Endothelial cell of umbilical vein (primary cell): ENCODE measurements at regions of chr10 and their contacts with region 1.

Region 1: GRCh38 chr10:60816628-60817397 is 38.5 kb downstream of the CDK1 start:
- DNase-seq: peak; percentile 88
- H3K4me3 ChIP-seq: no peak overlapping the region
- H3K27ac ChIP-seq: peak overlapping the region; percentile 36
- H3K4me1 ChIP-seq: peaks cover 26% of the 10 kb centered on the region
- H3K27me3 ChIP-seq: no peaks in the 10 kb centered on the region
- CTCF ChIP-seq: peak; percentile 64 to 71
- POLR2A ChIP-seq: no peak

Region 2: GRCh38 chr10:60834401-60834800 is 17.6 kb after region 1 on chr10:
- CTCF ChIA-PET with region 1: interaction called, 10 read pairs
- POLR2A ChIA-PET with region 1: no interaction called
- dilution Hi-C with region 1: no loop called
- intact Hi-C with region 1: no loop called
- DNase-seq: no peak
- H3K4me3 ChIP-seq: no peak overlapping the region
- H3K27ac ChIP-seq: no peak overlapping the region
- H3K4me1 ChIP-seq: peaks cover 2% of the 10 kb centered on the region
- H3K27me3 ChIP-seq: no peaks in the 10 kb centered on the region
- CTCF ChIP-seq: no peak
- POLR2A ChIP-seq: no peak

Region 3: DNA sequence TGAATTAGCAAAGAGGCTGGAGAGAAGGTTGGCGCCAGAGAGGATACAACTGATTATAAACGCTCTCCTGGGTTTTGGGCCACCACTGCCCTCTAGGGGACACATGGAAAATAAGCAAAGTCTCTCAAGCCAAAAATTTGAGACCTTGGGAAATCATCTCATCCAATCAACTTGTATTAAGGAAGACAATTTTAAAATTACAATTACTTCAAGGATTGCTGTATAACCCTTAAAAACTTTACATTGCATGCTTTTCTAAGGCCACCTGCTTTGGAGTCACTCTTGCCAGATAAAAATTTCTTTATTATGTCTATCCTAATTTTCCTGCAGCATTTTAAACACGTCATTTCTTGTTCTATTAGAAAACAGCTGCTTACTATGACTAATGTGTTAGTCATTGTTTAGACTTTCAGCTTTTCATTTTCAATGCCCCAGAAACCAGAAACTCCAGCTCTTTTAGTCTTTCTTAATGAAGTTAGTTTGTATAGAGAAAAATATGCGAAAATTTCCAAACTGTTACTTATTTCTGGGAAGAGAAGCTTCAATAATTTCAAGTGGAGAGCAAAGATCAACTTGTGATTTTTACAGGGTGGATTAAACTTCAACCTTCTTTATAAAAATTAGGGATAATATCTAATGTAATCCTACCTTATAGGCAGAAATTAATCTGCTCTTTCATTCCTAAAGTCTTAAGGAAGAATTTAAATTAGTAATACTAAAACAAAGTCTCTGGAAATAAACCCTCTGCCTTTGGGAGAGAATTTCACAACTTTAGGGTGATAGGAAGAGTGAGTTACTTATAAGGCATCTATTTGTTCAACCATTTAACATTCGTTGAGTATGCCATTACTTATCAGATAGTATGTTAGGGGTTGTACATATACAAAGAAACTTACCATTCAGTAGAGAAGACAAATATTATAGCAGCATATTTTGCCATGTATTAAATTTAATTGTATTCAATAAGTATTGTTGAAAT is 147.7 kb after region 1 on chr10:
- CTCF ChIA-PET with region 1: interaction called, 83 read pairs
- POLR2A ChIA-PET with region 1: no interaction called
- dilution Hi-C with region 1: no loop called
- intact Hi-C with region 1: loop called (anchors 1 kb)
- DNase-seq: peak; percentile 91
- H3K4me3 ChIP-seq: peak overlapping the region in 1 of 3 experiments; percentile 34
- H3K27ac ChIP-seq: peak overlapping the region; percentile 94
- H3K4me1 ChIP-seq: peaks cover 27% of the 10 kb centered on the region
- H3K27me3 ChIP-seq: no peaks in the 10 kb centered on the region
- CTCF ChIP-seq: peak; percentile 67 to 74
- POLR2A ChIP-seq: no peak

Region 4: GRCh38 chr10:61284222-61284890 is 467.5 kb after region 1 on chr10:
- CTCF ChIA-PET with region 1: interaction called, 20 read pairs
- POLR2A ChIA-PET with region 1: no interaction called
- dilution Hi-C with region 1: no loop called
- intact Hi-C with region 1: loop called (anchors 1 kb)
- DNase-seq: peak; percentile 83
- H3K4me3 ChIP-seq: no peak overlapping the region
- H3K27ac ChIP-seq: no peak overlapping the region
- H3K4me1 ChIP-seq: peaks cover 12% of the 10 kb centered on the region
- H3K27me3 ChIP-seq: no peaks in the 10 kb centered on the region
- CTCF ChIP-seq: peak; percentile 39 to 48
- POLR2A ChIP-seq: no peak

Region 5: GRCh38 chr10:61643316-61643751 is 826.5 kb after region 1 on chr10:
- CTCF ChIA-PET with region 1: no interaction called
- POLR2A ChIA-PET with region 1: no interaction called
- dilution Hi-C with region 1: no loop called
- intact Hi-C with region 1: loop called (anchors 5 kb)
- DNase-seq: peak; percentile 43
- H3K4me3 ChIP-seq: no peak overlapping the region
- H3K27ac ChIP-seq: peak overlapping the region; percentile 50
- H3K4me1 ChIP-seq: peaks cover 18% of the 10 kb centered on the region
- H3K27me3 ChIP-seq: no peaks in the 10 kb centered on the region
- CTCF ChIP-seq: no peak
- POLR2A ChIP-seq: no peak

Region 6: DNA sequence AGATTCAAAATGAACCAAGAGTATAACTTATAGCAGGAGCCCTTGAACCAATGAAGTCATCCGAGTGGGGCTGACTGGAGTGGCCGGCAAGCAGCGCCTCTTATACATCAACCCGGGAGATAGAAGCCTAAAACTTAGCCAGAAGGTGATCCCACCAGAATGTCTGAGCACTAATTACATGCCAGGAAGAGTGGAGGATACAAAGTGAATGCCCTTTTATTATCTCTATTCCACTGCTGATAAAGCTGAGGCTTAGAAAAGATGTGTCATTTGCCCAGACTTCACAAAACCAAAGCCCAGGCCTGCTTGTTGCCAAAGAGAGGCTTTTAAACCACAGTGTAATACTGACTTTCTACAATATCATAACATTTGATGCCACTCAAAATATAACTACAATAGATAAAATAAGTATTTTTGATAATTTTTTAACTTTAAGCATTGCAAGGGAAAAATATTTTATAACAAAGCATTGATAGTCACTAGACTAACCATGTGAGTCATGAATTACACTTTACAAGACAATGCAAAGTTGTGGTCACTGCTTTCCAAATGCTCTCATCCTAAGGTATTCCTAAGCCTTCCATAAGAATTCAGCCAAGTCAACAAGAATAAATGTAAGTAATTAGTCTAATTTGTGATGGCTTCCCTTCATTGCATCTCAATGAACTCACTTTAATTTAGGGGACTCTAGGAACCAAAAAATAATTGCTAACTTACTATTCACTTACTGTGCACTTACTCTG is 1026.1 kb after region 1 on chr10:
- CTCF ChIA-PET with region 1: no interaction called
- POLR2A ChIA-PET with region 1: no interaction called
- dilution Hi-C with region 1: no loop called
- intact Hi-C with region 1: no loop called
- DNase-seq: no peak
- H3K4me3 ChIP-seq: no peak overlapping the region
- H3K27ac ChIP-seq: no peak overlapping the region
- H3K4me1 ChIP-seq: peaks cover 5% of the 10 kb centered on the region
- H3K27me3 ChIP-seq: no peaks in the 10 kb centered on the region
- CTCF ChIP-seq: no peak
- POLR2A ChIP-seq: no peak

Region 7: GRCh38 chr10:62244780-62245467 is 1428.1 kb after region 1 on chr10:
- CTCF ChIA-PET with region 1: interaction called, 5 read pairs
- POLR2A ChIA-PET with region 1: no interaction called
- dilution Hi-C with region 1: no loop called
- intact Hi-C with region 1: loop called (anchors 1 kb)
- DNase-seq: peak; percentile 86
- H3K4me3 ChIP-seq: no peak overlapping the region
- H3K27ac ChIP-seq: no peak overlapping the region
- H3K4me1 ChIP-seq: peaks cover 17% of the 10 kb centered on the region
- H3K27me3 ChIP-seq: no peaks in the 10 kb centered on the region
- CTCF ChIP-seq: peak; percentile 63 to 71
- POLR2A ChIP-seq: no peak